ENCODE measurements at regions of chr1 and their contacts with region 1.

Region 1: GRCh38 chr1:182397771-182398393 is 2.6 kb downstream of the TEDDM1 start:
- DNase-seq: no peak
- ATAC-seq: no peak
- H3K4me3 ChIP-seq: no peak overlapping the region
- H3K27ac ChIP-seq: no peak overlapping the region
- H3K4me1 ChIP-seq: peaks cover 38% of the 10 kb centered on the region
- H3K27me3 ChIP-seq: no peaks in the 10 kb centered on the region
- CTCF ChIP-seq: no peak
- EP300 ChIP-seq: no peak
- POLR2A ChIP-seq: no peak
- RAD21 ChIP-seq: no peak

Region 2: GRCh38 chr1:182143154-182143657 is 254.7 kb before region 1 on chr1:
- CTCF ChIA-PET with region 1: interaction called, 70 read pairs
- POLR2A ChIA-PET with region 1: interaction called, 48 read pairs
- in situ Hi-C with region 1: loop called (anchors 5 kb)
- intact Hi-C with region 1: loop called (anchors 1 kb)
- DNase-seq: peak; percentile 71
- ATAC-seq: peak; percentile 90
- H3K4me3 ChIP-seq: peak overlapping the region in 1 of 3 experiments; percentile 30; a peak in 2 of 6 replicates
- H3K27ac ChIP-seq: no peak overlapping the region
- H3K4me1 ChIP-seq: peaks cover 51% of the 10 kb centered on the region
- H3K27me3 ChIP-seq: no peaks in the 10 kb centered on the region
- CTCF ChIP-seq: peak; percentile 95
- EP300 ChIP-seq: no peak
- POLR2A ChIP-seq: no peak
- RAD21 ChIP-seq: peak; percentile 92

Region 3: DNA sequence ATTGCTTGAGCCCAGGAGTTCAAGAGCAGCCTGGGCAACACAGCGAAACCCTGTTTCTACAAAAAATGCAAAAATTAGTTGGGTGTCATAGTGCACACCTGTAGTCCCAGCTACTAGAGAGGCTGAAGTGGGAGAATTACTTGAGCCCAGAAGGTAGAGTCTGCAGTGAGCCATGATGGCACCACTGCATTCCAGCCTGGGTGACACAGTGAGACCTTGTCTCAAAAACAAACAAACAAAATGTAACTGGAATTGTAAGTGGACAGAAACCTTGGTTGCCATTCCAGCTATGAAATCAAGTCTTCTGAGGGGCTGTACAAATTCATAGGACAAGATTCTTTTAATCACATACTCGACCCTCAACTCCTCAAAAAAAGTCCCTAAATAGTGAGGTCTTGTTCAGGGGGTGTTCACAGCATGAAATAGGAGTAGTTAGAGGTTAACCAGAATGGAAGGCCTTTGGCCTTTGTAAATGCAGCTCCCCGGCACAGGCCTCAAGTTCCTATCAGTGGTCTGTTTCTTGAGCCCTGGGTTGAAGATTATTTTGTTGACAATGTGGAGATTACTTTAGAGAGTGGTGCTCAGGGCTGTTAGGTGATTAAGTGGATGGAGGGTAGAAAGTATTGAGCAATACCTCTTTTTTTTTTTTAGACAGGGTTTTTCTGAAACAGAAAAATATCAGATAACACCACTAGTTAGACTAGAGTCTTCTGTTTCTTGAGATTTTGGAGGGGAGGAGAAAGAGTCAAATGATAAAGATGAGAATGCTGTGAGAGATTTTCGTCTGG is 197.7 kb before region 1 on chr1:
- CTCF ChIA-PET with region 1: no interaction called
- POLR2A ChIA-PET with region 1: no interaction called
- in situ Hi-C with region 1: no loop called
- intact Hi-C with region 1: loop called (anchors 2 kb)
- DNase-seq: no peak
- ATAC-seq: peak; percentile 75
- H3K4me3 ChIP-seq: no peak overlapping the region
- H3K27ac ChIP-seq: peak overlapping the region; percentile 46
- H3K4me1 ChIP-seq: peaks cover 55% of the 10 kb centered on the region
- H3K27me3 ChIP-seq: peaks cover 0 to 1% of the 10 kb centered on the region in 2 experiments; a peak in 1 of 5 replicates
- CTCF ChIP-seq: no peak
- EP300 ChIP-seq: peak in 1 of 2 experiments; percentile 78; a peak in 2 of 4 replicates
- POLR2A ChIP-seq: no peak
- RAD21 ChIP-seq: no peak

Region 4: DNA sequence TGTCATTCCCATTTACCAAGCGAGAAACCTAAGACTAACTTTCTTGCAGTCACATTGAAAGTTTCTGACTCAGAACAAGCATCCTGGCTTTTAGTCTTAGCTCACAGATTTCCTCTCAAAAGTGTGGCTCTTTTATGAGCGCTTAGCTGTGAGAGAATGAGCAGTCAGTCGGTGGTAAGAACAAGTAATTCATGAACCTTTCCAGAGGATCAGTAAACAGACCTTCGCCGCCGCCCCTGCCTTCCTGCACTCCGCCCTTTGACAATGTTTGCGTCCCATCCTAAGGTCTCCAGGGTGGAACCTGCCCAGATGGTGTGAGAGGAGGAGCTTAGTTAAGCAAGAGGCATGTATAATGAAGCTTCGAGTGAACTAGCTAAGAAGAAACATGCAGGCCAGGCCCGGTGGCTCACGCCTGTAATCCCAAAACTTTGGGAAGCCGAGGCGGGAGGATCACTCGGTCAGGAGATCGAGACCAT is 148.6 kb before region 1 on chr1:
- CTCF ChIA-PET with region 1: no interaction called
- POLR2A ChIA-PET with region 1: no interaction called
- in situ Hi-C with region 1: no loop called
- intact Hi-C with region 1: loop called (anchors 2 kb)
- DNase-seq: peak; percentile 90
- ATAC-seq: peak; percentile 100
- H3K4me3 ChIP-seq: peak overlapping the region in 2 of 3 experiments; percentile 49 to 61; a peak in 2 of 6 replicates
- H3K27ac ChIP-seq: peak overlapping the region; percentile 80
- H3K4me1 ChIP-seq: peaks cover 28% of the 10 kb centered on the region
- H3K27me3 ChIP-seq: no peaks in the 10 kb centered on the region
- CTCF ChIP-seq: no peak
- EP300 ChIP-seq: peak in 1 of 2 experiments; percentile 44; a peak in 1 of 4 replicates
- POLR2A ChIP-seq: peak in 1 of 2 experiments; percentile 51; a peak in 1 of 4 replicates
- RAD21 ChIP-seq: 0 out of 2 replicates have a peak, but pooled peaks have one; percentile 19